ENCODE measurements at regions of chr14 and their contacts with region 1.

Region 1: DNA sequence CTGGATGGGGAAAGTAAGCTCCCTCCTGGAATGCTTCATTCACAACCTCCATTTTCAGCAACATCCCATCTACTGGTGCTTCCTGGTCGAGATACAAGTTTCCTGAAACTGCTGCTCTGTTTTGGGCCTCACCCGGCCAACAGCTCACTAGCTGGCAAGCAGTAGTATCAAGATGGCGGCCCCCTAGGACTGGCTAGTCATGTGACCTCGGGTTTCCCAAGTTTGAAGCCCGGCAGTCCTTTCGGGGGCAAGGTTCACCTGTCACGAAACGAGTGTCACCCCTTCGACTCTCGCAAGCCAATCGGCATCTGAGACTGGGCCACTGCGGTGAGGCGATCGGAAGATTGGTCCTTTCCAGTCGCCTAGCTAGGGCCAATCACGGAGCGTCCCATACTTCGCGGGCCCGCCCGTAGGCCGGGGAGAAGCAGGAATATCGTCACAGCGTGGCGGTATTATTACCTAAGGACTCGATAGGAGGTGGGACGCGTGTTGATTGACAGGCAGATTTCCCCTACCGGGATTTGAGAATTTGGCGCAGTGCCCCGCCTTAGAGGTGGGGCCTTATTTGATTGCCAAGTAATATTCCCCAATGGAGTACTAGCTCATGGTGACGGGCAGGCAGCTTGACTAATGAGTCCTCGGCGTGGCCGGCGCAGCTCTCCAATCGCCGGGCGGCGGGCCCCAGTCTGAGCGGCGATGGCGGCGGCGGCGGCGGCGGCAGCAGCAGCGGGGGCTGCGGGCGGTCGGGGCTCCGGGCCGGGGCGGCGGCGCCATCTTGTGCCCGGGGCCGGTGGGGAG is at the start of gene PABPN1:
- DNase-seq: peak; percentile 89
- ATAC-seq: peak; percentile 87
- H3K4me3 Mint-ChIP-seq: peak within 1 kb of the TSS; percentile 90
- H3K27ac Mint-ChIP-seq: peak within 1 kb of the TSS; percentile 98
- H3K4me1 Mint-ChIP-seq: peaks cover 26% of the 10 kb centered on the region
- H3K27me3 Mint-ChIP-seq: no peaks in the 10 kb centered on the region
- CTCF ChIP-seq: no peak
- total RNA-seq, gene PABPN1: 259 and 264 TPM in 2 replicates

Region 2: GRCh38 chr14:23286020-23286905 is 34.7 kb before region 1 on chr14 and contains the start of gene HOMEZ:
- CTCF ChIA-PET with region 1: no interaction called
- POLR2A ChIA-PET with region 1: interaction called, 34 read pairs
- intact Hi-C with region 1: loop called (anchors 1 kb)
- DNase-seq: peak; percentile 97
- ATAC-seq: peak; percentile 97
- H3K4me3 Mint-ChIP-seq: peak within 1 kb of the TSS; percentile 96
- H3K27ac Mint-ChIP-seq: peak within 1 kb of the TSS; percentile 90
- H3K4me1 Mint-ChIP-seq: peaks cover 18% of the 10 kb centered on the region
- H3K27me3 Mint-ChIP-seq: no peaks in the 10 kb centered on the region
- CTCF ChIP-seq: no peak
- total RNA-seq, gene HOMEZ: 10.8 and 11.5 TPM in 2 replicates

Region 3: GRCh38 chr14:23306410-23307145 is 14.4 kb before region 1 on chr14 and contains the start of gene BCL2L2:
- CTCF ChIA-PET with region 1: interaction called, 38 read pairs
- POLR2A ChIA-PET with region 1: interaction called, 339 read pairs
- intact Hi-C with region 1: loop called (anchors 1 kb)
- DNase-seq: peak; percentile 41
- ATAC-seq: no peak
- H3K4me3 Mint-ChIP-seq: peak within 1 kb of the TSS; percentile 82
- H3K27ac Mint-ChIP-seq: peak within 1 kb of the TSS; percentile 79
- H3K4me1 Mint-ChIP-seq: peaks cover 37% of the 10 kb centered on the region
- H3K27me3 Mint-ChIP-seq: no peaks in the 10 kb centered on the region
- CTCF ChIP-seq: no peak
- total RNA-seq, gene BCL2L2: 10.4 and 11.8 TPM in 2 replicates

Region 4: GRCh38 chr14:23430016-23430787 is 109.2 kb after region 1 on chr14:
- CTCF ChIA-PET with region 1: no interaction called
- POLR2A ChIA-PET with region 1: no interaction called
- intact Hi-C with region 1: no loop called
- DNase-seq: no peak
- ATAC-seq: no peak
- H3K4me3 Mint-ChIP-seq: no peak overlapping the region
- H3K27ac Mint-ChIP-seq: no peak overlapping the region
- H3K4me1 Mint-ChIP-seq: no peaks in the 10 kb centered on the region
- H3K27me3 Mint-ChIP-seq: peaks cover 32% of the 10 kb centered on the region
- CTCF ChIP-seq: no peak

Region 5: GRCh38 chr14:23567192-23568020 is 246.4 kb after region 1 on chr14 and contains the start of gene AP1G2:
- CTCF ChIA-PET with region 1: no interaction called
- POLR2A ChIA-PET with region 1: interaction called, 15 read pairs
- intact Hi-C with region 1: no loop called
- DNase-seq: peak; percentile 87
- ATAC-seq: peak; percentile 96
- H3K4me3 Mint-ChIP-seq: peak within 1 kb of the TSS; percentile 100
- H3K27ac Mint-ChIP-seq: peak within 1 kb of the TSS; percentile 98
- H3K4me1 Mint-ChIP-seq: peaks cover 32% of the 10 kb centered on the region
- H3K27me3 Mint-ChIP-seq: peaks cover 9% of the 10 kb centered on the region
- CTCF ChIP-seq: no peak
- total RNA-seq, gene AP1G2: 336 and 373 TPM in 2 replicates

Region 6: GRCh38 chr14:23804817-23805216 is 483.8 kb after region 1 on chr14:
- CTCF ChIA-PET with region 1: no interaction called
- POLR2A ChIA-PET with region 1: no interaction called
- intact Hi-C with region 1: no loop called
- DNase-seq: no peak
- ATAC-seq: no peak
- H3K4me3 Mint-ChIP-seq: no peak overlapping the region
- H3K27ac Mint-ChIP-seq: no peak overlapping the region
- H3K4me1 Mint-ChIP-seq: no peaks in the 10 kb centered on the region
- H3K27me3 Mint-ChIP-seq: peaks cover 3% of the 10 kb centered on the region
- CTCF ChIP-seq: no peak

Measured in activated B cell treated with CpG ODN at 0.5 μM for 24 hours (primary cell).